ENCODE measurements at regions of chr5 and their contacts with region 1.

Region 1: GRCh38 chr5:150560401-150561193 is 52.7 kb downstream of the NDST1 start:
- DNase-seq: peak; percentile 86 to 93
- H3K4me3 ChIP-seq: no peak overlapping the region
- H3K27ac ChIP-seq: no peak overlapping the region
- H3K4me1 ChIP-seq: peaks cover 0 to 22% (median 8%) of the 10 kb centered on the region in 4 donors
- H3K27me3 ChIP-seq: no peaks in the 10 kb centered on the region
- CTCF ChIP-seq: peak; percentile 91 to 93

Region 2: GRCh38 chr5:150846654-150847333 is 286.2 kb after region 1 on chr5:
- intact Hi-C with region 1: loop called (anchors 2 kb)
- DNase-seq: no peak
- H3K4me3 ChIP-seq: no peak overlapping the region
- H3K27ac ChIP-seq: no peak overlapping the region
- H3K4me1 ChIP-seq: peaks cover 0 to 8% (median 0%) of the 10 kb centered on the region in 4 donors
- H3K27me3 ChIP-seq: no peaks in the 10 kb centered on the region
- CTCF ChIP-seq: peak; percentile 60 to 80